Sigmoid colon (tissue), 7 donors: ENCODE measurements at regions of chr12 and their contacts with region 1.

Region 1: DNA sequence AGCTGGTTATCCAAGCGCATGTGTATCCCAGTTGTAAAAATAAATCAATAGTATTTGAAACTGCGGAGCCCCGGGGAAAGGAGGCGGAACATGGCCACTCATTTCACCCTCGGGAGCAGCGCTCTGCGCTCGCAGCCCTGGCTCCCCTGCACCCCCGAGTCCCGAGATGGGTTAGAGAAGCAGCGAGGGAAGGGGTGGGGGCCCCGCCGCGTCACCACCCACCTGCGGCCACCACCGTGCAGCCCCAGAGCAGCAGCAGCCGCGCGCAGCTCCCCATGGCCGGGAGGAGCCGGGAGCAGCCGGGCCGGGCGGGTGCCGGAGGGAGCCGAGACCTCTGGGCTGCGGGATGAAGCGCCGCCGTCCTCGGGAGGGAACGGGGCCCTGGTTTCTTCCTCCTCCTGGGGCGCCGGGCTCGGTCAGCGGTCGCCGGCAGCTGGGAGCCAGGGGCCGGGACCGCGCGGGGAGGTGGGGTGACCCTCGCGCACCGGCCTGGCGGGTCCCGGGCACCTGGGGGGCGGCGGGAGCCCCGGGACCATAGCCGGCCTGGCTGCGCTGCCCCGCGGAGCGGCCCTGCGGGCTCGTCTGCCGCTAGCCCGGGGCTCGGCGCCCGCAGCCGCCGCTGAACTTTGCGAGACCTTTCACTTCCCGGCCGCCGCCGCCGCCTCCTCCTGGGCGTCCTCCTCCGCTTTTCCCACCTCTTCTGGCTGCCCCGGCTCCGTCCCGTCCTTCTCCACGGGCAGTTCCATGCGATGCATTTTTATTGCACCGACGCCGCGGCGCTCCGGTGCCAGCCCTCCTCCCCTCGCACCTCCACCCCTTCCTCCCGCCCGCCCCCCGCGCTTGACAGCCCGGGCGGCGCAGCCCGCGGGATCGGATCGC is at the start of gene NTN4:
- DNase-seq: peak; percentile 65
- H3K4me3 ChIP-seq: peak within 1 kb of the TSS; percentile 67 to 79 (median 74)
- H3K27ac ChIP-seq: peak within 1 kb of the TSS; percentile 66 to 89 (median 74)
- H3K4me1 ChIP-seq: peaks cover 0 to 19% (median 14%) of the 10 kb centered on the region in 4 donors
- H3K27me3 ChIP-seq: no peaks in the 10 kb centered on the region
- CTCF ChIP-seq: no peak
- EP300 ChIP-seq: no peak
- POLR2A ChIP-seq: no peak
- total RNA-seq, gene NTN4: 7.2 to 17.4 (median 10.3) TPM

Region 2: GRCh38 chr12:95739561-95740313 is 50.5 kb before region 1 on chr12:
- intact Hi-C with region 1: loop called (anchors 5 kb)
- DNase-seq: no peak
- H3K4me3 ChIP-seq: no peak overlapping the region
- H3K27ac ChIP-seq: peak overlapping the region in 1 of 4 donors; percentile 62
- H3K4me1 ChIP-seq: peaks cover 0 to 16% (median 3%) of the 10 kb centered on the region in 4 donors
- H3K27me3 ChIP-seq: no peaks in the 10 kb centered on the region
- CTCF ChIP-seq: no peak
- EP300 ChIP-seq: no peak
- POLR2A ChIP-seq: no peak

Region 3: GRCh38 chr12:95858479-95859343 is 68.4 kb after region 1 on chr12 and contains the start of gene SNRPF:
- intact Hi-C with region 1: loop called (anchors 1 kb)
- DNase-seq: peak; percentile 98
- H3K4me3 ChIP-seq: peak within 1 kb of the TSS; percentile 66 to 79 (median 72)
- H3K27ac ChIP-seq: peak within 1 kb of the TSS; percentile 74 to 81 (median 79)
- H3K4me1 ChIP-seq: peaks cover 0 to 22% (median 20%) of the 10 kb centered on the region in 4 donors
- H3K27me3 ChIP-seq: no peaks in the 10 kb centered on the region
- CTCF ChIP-seq: no peak
- EP300 ChIP-seq: no peak
- POLR2A ChIP-seq: no peak
- total RNA-seq, gene SNRPF: 3.0 to 9.0 (median 7.2) TPM